Natural killer cell (primary cell): ENCODE measurements at regions of chr13 and their contacts with region 1.

Region 1: DNA sequence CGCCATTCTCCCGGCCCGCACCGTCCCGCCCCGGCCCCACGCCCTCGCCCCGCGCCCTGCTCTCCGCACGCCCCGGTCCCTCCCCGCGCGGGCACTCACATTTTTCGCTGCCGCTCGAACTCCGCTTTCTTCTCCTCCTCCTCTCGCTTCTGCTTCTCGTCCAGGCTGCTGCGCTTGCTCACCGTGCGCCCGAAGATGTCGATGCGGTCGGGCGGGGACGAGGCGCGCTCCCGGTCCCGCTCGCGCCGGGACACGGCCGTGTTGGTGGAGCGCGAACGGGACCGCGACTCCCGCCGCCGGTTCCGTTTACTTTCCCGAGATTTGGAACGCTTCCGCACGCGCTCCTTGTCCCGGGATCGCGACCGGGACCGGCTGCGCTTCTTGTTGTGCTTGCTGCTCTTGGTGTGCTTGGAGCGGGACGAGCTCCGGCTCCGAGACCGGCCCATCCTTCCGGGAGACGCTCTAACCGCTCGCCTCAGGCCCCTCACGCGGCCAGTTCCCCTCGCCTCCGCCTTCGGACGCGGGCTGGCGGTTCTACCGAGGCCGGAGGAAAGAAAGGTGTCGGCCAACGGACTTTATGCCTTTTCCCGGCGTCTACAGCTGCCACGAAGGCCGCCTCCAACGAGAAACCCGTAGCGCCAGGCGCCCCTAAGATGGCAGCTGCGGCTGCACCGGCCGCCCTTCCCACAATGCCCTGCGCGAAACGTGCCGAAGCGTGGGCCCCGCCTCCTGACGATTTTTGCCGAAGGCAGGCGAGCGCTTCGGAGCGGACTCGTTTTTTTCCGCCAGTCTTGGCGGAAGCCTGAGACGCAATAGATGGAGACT is at the start of gene ARGLU1:
- DNase-seq: peak; percentile 97
- ATAC-seq: peak; percentile 77 to 95 (median 83)
- H3K4me3 ChIP-seq: peak within 1 kb of the TSS; percentile 100
- H3K4me3 Mint-ChIP-seq: peak within 1 kb of the TSS; percentile 97
- H3K27ac ChIP-seq: peak within 1 kb of the TSS; percentile 99
- H3K27ac Mint-ChIP-seq: peak within 1 kb of the TSS; percentile 96 to 99
- H3K4me1 ChIP-seq: peaks cover 20% of the 10 kb centered on the region
- H3K4me1 Mint-ChIP-seq: peaks cover 65 to 67% of the 10 kb centered on the region in 2 donors
- H3K27me3 ChIP-seq: no peaks in the 10 kb centered on the region
- H3K27me3 Mint-ChIP-seq: no peaks in the 10 kb centered on the region
- CTCF ChIP-seq: no peak
- total RNA-seq, gene ARGLU1: 158 to 179 (median 161) TPM

Region 2: DNA sequence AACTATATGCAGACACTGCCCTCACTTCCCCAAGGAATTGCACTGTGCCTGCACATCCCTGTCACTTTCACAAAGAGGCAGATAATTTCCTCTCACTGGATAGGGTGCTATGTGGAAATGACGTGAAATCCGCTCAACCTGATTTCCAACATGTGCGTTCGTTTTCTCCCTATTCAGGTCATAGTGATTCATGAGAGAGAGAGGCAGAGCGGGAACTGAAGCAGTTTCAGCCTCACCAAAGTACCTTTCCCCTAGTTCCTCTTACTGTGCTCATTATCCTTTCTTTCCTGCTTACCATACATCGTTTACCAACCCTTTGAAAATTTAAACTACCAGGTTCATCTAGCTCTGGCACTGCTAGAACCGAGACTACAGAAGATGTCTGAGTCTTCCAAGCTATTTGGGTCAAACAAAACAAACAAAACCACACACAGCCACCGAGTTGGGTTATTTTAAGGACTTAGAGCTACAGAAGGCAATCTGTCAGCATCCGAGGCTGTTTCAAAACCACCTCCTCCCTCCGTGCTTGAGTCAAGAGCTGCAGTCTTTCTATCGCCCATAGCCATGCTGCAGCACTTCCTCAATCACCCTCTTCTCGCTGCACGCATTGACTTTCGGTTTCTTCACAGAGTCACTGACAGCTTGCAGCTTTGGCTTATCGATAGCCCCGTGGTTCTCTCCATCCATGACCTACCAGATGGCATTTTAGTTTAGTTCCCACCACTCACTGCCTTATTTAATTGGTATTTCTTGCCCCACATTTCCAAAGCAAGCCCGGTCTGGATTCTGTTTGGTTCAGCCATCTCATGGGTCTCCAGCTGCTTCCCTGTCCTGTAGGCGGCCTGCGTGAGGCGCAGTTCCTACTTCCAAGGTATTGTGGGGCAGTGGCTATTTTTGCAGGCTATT is 1428.1 kb before region 1 on chr13:
- intact Hi-C with region 1: loop called (anchors 5 kb)
- DNase-seq: peak; percentile 49 to 80
- ATAC-seq: peak; percentile 92 to 94 (median 93)
- H3K4me3 ChIP-seq: peak overlapping the region; percentile 51
- H3K4me3 Mint-ChIP-seq: peak overlapping the region; percentile 90
- H3K27ac ChIP-seq: peak overlapping the region; percentile 83
- H3K27ac Mint-ChIP-seq: peak overlapping the region; percentile 90 to 96
- H3K4me1 ChIP-seq: peaks cover 5% of the 10 kb centered on the region
- H3K4me1 Mint-ChIP-seq: peaks cover 21 to 22% of the 10 kb centered on the region in 2 donors
- H3K27me3 ChIP-seq: no peaks in the 10 kb centered on the region
- H3K27me3 Mint-ChIP-seq: no peaks in the 10 kb centered on the region
- CTCF ChIP-seq: peak; percentile 26

Region 3: DNA sequence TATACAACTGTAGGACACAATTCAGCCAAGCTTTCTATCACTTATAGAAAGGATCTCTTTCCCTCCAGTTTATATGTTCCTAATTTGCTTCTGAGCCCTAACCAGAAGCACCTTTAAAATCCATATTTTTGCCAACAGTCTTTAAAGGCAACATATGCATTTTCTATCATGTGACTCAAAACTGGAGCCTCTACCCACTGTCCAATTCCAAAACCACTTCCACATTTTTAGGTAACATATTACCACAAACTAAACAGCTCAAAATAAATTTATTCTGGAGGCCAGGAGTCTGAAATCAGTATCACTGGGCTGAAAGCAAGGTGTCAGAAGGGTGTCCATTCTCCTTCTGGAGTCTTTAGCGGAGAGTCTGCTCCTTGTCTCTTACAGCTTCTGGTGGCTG is 16.3 kb before region 1 on chr13:
- intact Hi-C with region 1: loop called (anchors 2 kb)
- DNase-seq: no peak
- ATAC-seq: no peak
- H3K4me3 ChIP-seq: no peak overlapping the region
- H3K4me3 Mint-ChIP-seq: no peak overlapping the region
- H3K27ac ChIP-seq: no peak overlapping the region
- H3K27ac Mint-ChIP-seq: peak overlapping the region; percentile 0 to 24
- H3K4me1 ChIP-seq: no peaks in the 10 kb centered on the region
- H3K4me1 Mint-ChIP-seq: peaks cover 45 to 55% of the 10 kb centered on the region in 2 donors
- H3K27me3 ChIP-seq: no peaks in the 10 kb centered on the region
- H3K27me3 Mint-ChIP-seq: no peaks in the 10 kb centered on the region
- CTCF ChIP-seq: no peak